ENCODE measurements at regions of chr19 and their contacts with region 1.

Region 1: DNA sequence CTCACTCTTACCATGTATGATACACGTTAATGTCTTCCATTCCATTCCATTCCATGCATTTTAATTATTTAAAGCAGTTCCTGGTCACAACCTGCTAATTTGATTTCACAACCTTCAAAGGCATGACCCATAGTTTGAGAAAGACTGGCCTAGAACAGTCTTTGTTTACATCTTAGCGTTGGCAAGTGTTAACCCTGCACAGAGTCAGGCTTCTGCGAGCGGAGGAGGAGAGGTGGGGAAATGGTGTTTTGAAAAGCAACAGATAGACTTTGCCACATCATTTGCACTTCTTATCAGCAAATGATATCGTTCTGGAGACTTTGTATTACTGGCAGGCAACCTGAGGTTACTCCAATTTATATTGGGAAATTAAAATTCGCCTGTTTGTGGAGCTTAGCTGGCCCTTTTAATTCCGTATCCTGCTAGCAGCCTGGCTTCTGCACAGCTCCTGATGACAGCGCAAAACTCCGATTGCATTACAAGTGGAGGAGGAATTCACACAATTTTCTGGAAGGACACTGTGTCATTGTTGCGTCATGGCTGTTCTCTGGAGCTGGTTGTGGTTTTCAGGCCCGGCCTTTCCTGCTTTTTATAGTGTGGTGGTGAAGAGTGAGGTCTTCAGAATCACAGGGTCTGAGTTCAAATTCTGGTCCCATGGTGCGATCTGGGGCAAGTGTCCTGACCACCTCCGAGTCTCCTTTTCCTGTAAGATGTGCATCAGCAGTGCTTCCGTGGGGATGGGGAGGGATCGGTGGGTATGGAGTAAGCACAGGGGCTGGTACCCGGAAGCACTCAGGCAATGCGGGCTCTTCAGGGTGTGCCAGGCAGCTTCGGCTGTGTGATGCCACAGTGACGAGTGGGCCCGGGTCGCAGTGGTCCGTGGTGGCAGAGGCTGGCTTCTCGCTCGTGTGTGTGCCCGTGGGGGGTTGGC is 49.1 kb upstream of the EHD2 start:
- DNase-seq: peak; percentile 56 to 92 (median 75)
- ATAC-seq: peak; percentile 53 to 66 (median 60)
- H3K4me3 ChIP-seq: no peak overlapping the region
- H3K27ac ChIP-seq: peak overlapping the region; percentile 73 to 97 (median 97)
- H3K4me1 ChIP-seq: peaks cover 0 to 75% (median 39%) of the 10 kb centered on the region in 4 donors
- H3K27me3 ChIP-seq: no peaks in the 10 kb centered on the region
- CTCF ChIP-seq: no peak
- POLR2A ChIP-seq: peak; percentile 54

Region 2: DNA sequence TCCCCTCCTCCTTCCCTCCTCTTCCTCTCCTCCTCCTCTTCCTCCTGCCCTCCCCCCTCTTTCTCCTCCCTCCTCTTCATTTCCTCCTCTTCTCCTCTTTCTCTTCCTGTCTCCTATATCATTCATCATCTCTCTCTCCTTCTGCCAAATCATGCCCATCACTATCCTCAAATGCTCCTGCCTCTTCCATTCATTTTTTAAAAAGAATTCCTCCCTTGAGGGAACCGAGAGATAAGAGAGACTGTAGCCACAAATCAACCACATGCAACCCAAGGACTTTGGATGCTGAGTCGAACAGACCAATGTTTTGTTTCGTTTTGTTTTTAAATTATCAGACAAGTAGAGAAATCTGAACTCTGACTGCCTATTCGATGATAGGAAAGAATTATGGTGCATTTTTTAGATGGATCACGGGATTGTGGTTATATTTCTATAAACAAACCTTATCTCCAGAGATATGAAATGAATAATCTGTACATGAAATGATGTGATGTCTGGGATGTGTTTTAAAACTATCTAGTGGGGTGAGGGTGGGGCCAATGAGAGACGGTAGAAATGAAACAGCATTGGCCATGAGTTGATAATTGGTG is 81.7 kb before region 1 on chr19:
- intact Hi-C with region 1: no loop called
- DNase-seq: no peak
- ATAC-seq: no peak
- H3K4me3 ChIP-seq: no peak overlapping the region
- H3K27ac ChIP-seq: no peak overlapping the region
- H3K4me1 ChIP-seq: no peaks in the 10 kb centered on the region
- H3K27me3 ChIP-seq: no peaks in the 10 kb centered on the region
- CTCF ChIP-seq: no peak
- POLR2A ChIP-seq: no peak

Region 3: GRCh38 chr19:47609906-47610894 is 53.9 kb before region 1 on chr19:
- intact Hi-C with region 1: loop called in 1 of 2 experiments (anchors 10 kb)
- DNase-seq: peak; percentile 75 to 81 (median 76)
- ATAC-seq: peak; percentile 33 to 51 (median 40)
- H3K4me3 ChIP-seq: peak overlapping the region; percentile 68 to 99 (median 99)
- H3K27ac ChIP-seq: peak overlapping the region; percentile 83 to 99 (median 89)
- H3K4me1 ChIP-seq: peaks cover 0 to 19% (median 8%) of the 10 kb centered on the region in 4 donors
- H3K27me3 ChIP-seq: no peaks in the 10 kb centered on the region
- CTCF ChIP-seq: no peak
- POLR2A ChIP-seq: peak; percentile 57